Activated CD8-positive, alpha-beta memory T cell treated with anti-CD3 and anti-CD28 coated beads, Interleukin-2, amount 10 ng/mL, durations not matched to agents 7 days and 5 days (primary cell): ENCODE measurements at regions of chr5 and their contacts with region 1.

Region 1: DNA sequence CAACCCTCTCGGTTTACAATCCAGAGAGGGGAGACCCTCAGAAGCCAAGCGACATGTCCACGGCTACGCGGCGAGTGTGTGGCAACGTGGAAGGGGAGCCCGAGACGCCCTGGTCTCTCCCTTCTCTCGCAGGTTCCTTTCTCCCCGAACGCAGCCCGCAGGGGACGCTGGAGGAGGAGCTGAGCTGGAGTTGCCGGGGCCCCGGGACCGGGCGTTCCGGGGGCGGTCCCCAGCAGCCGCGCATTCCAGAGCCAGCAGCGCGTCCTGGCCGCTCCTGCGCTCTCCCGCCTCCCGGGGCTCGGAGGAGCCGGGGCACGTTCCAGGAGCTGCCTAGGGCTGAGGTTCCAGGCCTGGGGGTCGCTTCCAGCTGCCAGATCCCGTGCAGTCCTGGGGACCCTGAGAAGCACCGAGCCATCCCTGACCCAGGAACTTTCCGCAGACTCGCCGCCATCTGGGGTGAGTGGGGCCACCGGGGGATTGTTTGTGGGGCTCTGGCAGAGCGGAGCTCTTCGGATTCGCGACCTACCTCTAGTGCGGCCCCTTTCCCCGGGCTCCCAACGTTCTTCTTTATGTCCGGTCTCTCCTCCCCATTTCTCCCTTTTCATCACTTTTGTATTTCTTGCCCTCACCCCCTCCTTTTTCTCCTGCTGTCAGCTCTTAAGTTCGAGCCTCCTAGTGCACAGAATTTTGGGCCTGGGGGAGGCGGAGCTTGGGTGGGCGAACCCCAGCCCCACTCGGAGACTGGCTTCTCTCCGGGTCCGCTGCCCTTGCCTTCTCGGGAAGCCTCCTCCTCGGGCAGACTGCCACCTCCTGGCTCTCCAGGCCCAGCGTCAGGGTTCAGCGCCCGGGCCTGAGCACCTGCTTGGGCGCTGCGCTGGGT is at the start of gene SMIM3:
- DNase-seq: peak; percentile 83
- ATAC-seq: peak; percentile 66
- H3K4me3 Mint-ChIP-seq: peak within 1 kb of the TSS; percentile 99
- H3K27ac Mint-ChIP-seq: peak within 1 kb of the TSS; percentile 94
- H3K4me1 Mint-ChIP-seq: peaks cover 65% of the 10 kb centered on the region
- H3K27me3 Mint-ChIP-seq: no peaks in the 10 kb centered on the region
- total RNA-seq, gene SMIM3: 22.1 to 37.5 TPM

Region 2: GRCh38 chr5:150129813-150130492 is 648.8 kb before region 1 on chr5:
- CTCF ChIA-PET with region 1: no interaction called
- DNase-seq: peak; percentile 71
- ATAC-seq: peak; percentile 79
- H3K4me3 Mint-ChIP-seq: no peak overlapping the region
- H3K27ac Mint-ChIP-seq: no peak overlapping the region
- H3K4me1 Mint-ChIP-seq: peaks cover 9% of the 10 kb centered on the region
- H3K27me3 Mint-ChIP-seq: no peaks in the 10 kb centered on the region

Region 3: DNA sequence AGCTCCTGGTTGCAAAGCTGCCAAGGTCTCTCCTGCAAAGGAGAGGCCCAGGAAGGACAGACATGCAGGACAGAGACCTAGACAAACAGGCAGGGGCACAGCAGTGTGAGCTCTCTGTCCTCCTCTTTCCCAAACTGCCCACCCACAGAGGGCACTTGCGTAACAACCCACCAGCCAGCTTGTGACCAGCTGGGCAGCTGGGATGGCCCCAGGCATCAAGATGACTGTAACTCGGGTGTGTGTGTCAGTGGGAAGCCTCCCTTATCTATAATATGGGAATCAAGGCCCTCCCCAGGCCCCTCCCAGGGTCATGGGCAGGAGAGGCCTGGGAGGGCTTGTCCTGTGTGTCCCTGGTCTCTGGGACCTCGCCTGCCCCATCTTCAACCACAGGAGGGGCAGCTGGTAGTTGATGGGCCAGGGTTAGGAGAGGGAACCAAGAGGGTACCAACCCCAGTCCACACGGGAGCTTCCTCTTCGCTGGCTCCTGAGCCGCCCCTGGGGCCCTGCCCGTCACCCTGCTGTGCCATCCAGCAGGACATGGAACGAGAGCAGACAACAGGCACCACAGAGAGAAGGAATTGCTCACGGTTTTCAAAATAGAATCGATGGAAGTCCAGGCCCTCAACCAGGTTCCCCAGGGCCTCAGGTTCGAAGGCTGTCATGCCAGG is 551.0 kb before region 1 on chr5:
- CTCF ChIA-PET with region 1: no interaction called
- DNase-seq: no peak
- ATAC-seq: no peak
- H3K4me3 Mint-ChIP-seq: no peak overlapping the region
- H3K27ac Mint-ChIP-seq: no peak overlapping the region
- H3K4me1 Mint-ChIP-seq: no peaks in the 10 kb centered on the region
- H3K27me3 Mint-ChIP-seq: no peaks in the 10 kb centered on the region

Region 4: GRCh38 chr5:150497274-150497988 is 281.3 kb before region 1 on chr5:
- CTCF ChIA-PET with region 1: no interaction called
- DNase-seq: no peak
- ATAC-seq: no peak
- H3K4me3 Mint-ChIP-seq: no peak overlapping the region
- H3K27ac Mint-ChIP-seq: no peak overlapping the region
- H3K4me1 Mint-ChIP-seq: no peaks in the 10 kb centered on the region
- H3K27me3 Mint-ChIP-seq: no peaks in the 10 kb centered on the region

Region 5: DNA sequence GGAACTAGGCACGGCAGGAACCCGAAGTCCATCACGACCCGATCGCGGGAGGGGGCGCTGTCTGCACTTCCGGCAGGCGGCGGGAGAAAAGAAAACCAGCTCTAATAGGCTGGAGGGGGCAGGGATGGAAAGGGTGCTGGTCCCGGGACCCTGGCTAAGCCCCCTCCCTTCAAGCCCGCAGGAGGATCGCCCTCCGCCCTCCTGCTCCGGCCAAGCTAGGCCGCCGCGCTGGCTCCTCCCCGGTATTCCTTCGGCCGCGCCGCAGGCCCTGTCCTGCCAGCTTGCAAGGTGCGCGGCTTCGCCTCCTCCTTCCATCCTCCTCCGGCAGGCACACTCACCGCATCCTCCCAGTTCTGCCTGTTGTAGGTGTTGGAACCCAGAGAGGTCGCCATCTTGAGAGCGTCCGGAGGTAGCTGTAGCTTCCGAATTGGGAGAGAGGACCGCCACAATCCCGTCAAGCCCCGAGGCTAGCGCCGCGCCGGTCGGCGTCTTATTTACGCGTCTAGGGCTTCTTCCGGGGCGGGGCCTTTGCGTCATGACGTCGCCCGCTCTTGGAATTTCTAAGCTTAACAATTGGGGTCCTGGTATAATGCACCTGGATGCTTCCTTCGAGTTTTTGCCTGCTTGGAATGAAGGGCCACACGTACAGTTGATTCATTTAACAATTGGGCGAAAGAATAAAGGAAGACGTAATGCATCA is 78.0 kb before region 1 on chr5 and contains the start of gene RBM22:
- CTCF ChIA-PET with region 1: interaction called, 73 read pairs
- DNase-seq: peak; percentile 95
- ATAC-seq: peak; percentile 97
- H3K4me3 Mint-ChIP-seq: no peak within 1 kb of the TSS
- H3K27ac Mint-ChIP-seq: no peak within 1 kb of the TSS
- H3K4me1 Mint-ChIP-seq: peaks cover 7% of the 10 kb centered on the region
- H3K27me3 Mint-ChIP-seq: no peaks in the 10 kb centered on the region
- total RNA-seq, gene RBM22: 63.3 to 78.7 TPM

Region 6: DNA sequence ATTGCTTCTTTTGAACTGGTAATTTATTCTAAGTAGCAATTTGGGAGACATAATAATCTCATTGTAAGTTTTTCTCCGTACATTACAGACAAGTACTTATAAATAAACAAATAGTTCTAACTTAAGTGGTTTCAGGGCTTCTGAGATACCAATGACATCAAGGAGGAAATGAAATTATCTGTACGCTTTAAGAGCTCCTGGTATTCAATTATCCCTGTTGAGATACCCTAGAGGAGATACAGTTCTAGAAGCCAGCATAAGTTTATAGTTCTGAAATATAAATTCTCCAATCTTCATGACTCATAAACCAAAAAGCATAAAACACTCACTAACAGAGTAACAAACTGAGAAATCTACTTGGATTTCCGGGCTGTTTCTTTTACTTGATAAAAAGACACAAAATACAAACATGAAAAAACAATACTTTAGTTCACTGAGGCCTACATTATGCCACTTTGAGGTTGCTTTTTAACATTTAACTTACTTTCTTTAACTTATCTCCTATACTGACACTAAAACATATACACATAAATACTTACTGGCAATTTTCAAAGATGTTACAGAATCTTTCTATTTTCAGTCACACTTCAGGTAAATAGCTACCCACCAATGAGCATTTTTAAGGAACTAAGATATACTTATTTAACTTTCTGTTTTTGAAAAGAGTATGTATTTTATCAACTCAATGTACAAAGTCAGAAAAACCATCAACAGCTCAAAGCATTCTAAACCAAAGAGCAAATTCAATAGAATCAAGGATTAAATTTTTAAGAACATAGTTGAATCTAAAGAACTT is 27.5 kb before region 1 on chr5:
- CTCF ChIA-PET with region 1: interaction called, 10 read pairs
- DNase-seq: no peak
- ATAC-seq: no peak
- H3K4me3 Mint-ChIP-seq: no peak overlapping the region
- H3K27ac Mint-ChIP-seq: peak overlapping the region; percentile 72
- H3K4me1 Mint-ChIP-seq: peaks cover 41% of the 10 kb centered on the region
- H3K27me3 Mint-ChIP-seq: no peaks in the 10 kb centered on the region

Region 7: GRCh38 chr5:150765799-150766169 is 13.0 kb before region 1 on chr5:
- CTCF ChIA-PET with region 1: interaction called, 15 read pairs
- DNase-seq: no peak
- ATAC-seq: no peak
- H3K4me3 Mint-ChIP-seq: no peak overlapping the region
- H3K27ac Mint-ChIP-seq: no peak overlapping the region
- H3K4me1 Mint-ChIP-seq: peaks cover 21% of the 10 kb centered on the region
- H3K27me3 Mint-ChIP-seq: no peaks in the 10 kb centered on the region

Region 8: GRCh38 chr5:150801117-150801927 is 22.6 kb after region 1 on chr5:
- CTCF ChIA-PET with region 1: interaction called, 11 read pairs
- DNase-seq: no peak
- ATAC-seq: peak; percentile 53
- H3K4me3 Mint-ChIP-seq: no peak overlapping the region
- H3K27ac Mint-ChIP-seq: no peak overlapping the region
- H3K4me1 Mint-ChIP-seq: peaks cover 9% of the 10 kb centered on the region
- H3K27me3 Mint-ChIP-seq: peaks cover 17% of the 10 kb centered on the region